ENCODE measurements at regions of chr5 and their contacts with region 1.

Region 1: GRCh38 chr5:149141224-149141956 is at the start of gene ABLIM3:
- H3K4me3 Mint-ChIP-seq: peak within 1 kb of the TSS; percentile 56
- H3K27ac Mint-ChIP-seq: no peak within 1 kb of the TSS
- H3K4me1 Mint-ChIP-seq: peaks cover 9% of the 10 kb centered on the region
- H3K27me3 Mint-ChIP-seq: peaks cover 20% of the 10 kb centered on the region

Region 2: GRCh38 chr5:149228618-149229297 is 87.4 kb after region 1 on chr5:
- intact Hi-C with region 1: loop called (anchors 1 kb)
- H3K4me3 Mint-ChIP-seq: no peak overlapping the region
- H3K27ac Mint-ChIP-seq: no peak overlapping the region
- H3K4me1 Mint-ChIP-seq: peaks cover 6% of the 10 kb centered on the region
- H3K27me3 Mint-ChIP-seq: peaks cover 11% of the 10 kb centered on the region

Region 3: GRCh38 chr5:149268928-149269557 is 127.7 kb after region 1 on chr5:
- intact Hi-C with region 1: loop called (anchors 2 kb)
- H3K4me3 Mint-ChIP-seq: no peak overlapping the region
- H3K27ac Mint-ChIP-seq: no peak overlapping the region
- H3K4me1 Mint-ChIP-seq: peaks cover 16% of the 10 kb centered on the region
- H3K27me3 Mint-ChIP-seq: peaks cover 46% of the 10 kb centered on the region

Measured in dendritic cell treated with granulocyte-macrophage colony-stimulating factor and Interleukin-4, amounts not matched to agents 40 ng/mL and 50 ng/mL, for 4 days (primary cell).